Activated CD8-positive, alpha-beta T cell treated with anti-CD3 and anti-CD28 coated beads, Interleukin-2, amount 10 ng/mL, durations not matched to agents 7 days and 5 days (primary cell): ENCODE measurements at regions of chr15 and their contacts with region 1.

Region 1: GRCh38 chr15:77496710-77497103 is 76.0 kb downstream of the HMG20A start:
- DNase-seq: peak; percentile 76
- ATAC-seq: peak; percentile 86
- H3K4me3 Mint-ChIP-seq: no peak overlapping the region
- H3K27ac Mint-ChIP-seq: no peak overlapping the region
- H3K4me1 Mint-ChIP-seq: peaks cover 20% of the 10 kb centered on the region
- H3K27me3 Mint-ChIP-seq: no peaks in the 10 kb centered on the region

Region 2: DNA sequence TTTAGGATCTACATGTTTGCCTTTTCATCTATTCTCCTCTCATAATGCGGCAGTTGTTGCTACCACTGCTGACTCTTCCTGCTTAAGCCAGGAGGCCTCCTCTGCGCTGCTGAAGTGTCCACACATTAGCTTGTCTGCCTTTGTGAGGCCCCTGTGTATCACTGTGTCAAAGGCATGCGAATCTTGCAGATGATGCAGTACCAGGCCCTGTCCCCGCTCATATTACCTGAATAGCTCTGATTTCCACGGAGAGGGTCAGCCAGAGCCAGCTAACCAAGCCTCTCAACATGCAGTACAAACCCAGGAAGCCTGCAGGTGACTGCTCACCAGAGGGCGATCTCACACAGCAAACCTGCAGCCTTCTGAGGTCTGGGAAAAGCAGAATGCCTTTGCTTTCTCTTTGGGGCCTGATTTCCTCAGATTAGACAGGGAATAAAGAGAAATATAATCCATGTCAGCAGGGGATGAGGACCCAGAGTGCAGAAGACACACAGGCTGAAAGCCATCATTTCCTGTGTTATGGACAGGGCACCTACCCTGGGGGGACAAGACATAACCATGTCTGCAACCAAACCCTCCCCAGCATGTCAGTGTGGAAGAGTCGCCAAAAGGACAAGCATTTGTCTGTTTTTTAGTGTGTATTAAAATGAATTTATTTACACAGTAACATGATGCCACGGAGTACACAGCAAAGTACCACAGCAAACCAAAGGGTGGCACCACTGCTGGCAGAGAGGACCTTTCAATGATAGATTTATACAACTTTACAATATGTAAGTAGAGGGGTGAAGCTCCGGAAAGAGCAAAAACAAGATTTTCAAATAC is 389.0 kb before region 1 on chr15:
- CTCF ChIA-PET with region 1: interaction called, 17 read pairs
- POLR2A ChIA-PET with region 1: no interaction called
- DNase-seq: peak; percentile 67
- ATAC-seq: peak; percentile 65
- H3K4me3 Mint-ChIP-seq: no peak overlapping the region
- H3K27ac Mint-ChIP-seq: no peak overlapping the region
- H3K4me1 Mint-ChIP-seq: peaks cover 2% of the 10 kb centered on the region
- H3K27me3 Mint-ChIP-seq: no peaks in the 10 kb centered on the region

Region 3: DNA sequence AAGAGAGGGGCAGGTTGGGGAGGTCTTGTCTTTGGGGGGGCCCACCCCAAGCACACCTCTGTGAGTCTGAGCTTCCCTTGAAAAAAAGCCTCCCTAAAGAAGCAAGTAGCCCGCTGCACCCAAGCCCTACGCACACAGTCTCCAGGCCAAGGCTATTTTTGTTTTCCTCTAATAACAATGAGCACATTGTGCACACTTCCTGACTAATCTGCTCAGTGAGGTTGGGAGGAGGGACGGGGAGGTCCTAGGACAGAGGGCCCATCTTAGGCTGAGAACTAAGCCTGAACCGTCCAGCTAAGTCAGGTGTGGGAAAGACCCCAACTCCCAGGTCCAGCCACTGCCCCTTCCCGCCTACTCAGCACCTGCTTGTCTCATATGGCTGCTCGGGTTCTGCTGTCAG is 11.2 kb after region 1 on chr15:
- CTCF ChIA-PET with region 1: interaction called, 13 read pairs
- POLR2A ChIA-PET with region 1: no interaction called
- DNase-seq: no peak
- ATAC-seq: no peak
- H3K4me3 Mint-ChIP-seq: no peak overlapping the region
- H3K27ac Mint-ChIP-seq: no peak overlapping the region
- H3K4me1 Mint-ChIP-seq: peaks cover 17% of the 10 kb centered on the region
- H3K27me3 Mint-ChIP-seq: no peaks in the 10 kb centered on the region